Heart right ventricle (tissue), 16 donors: ENCODE measurements at regions of chr15 and their contacts with region 1.

Region 1: GRCh38 chr15:84915011-84915958 is 30.8 kb downstream of the SLC28A1 start:
- DNase-seq: peak; percentile 75 to 90
- ATAC-seq: peak; percentile 53 to 88 (median 81)
- H3K4me3 ChIP-seq: no peak overlapping the region
- H3K27ac ChIP-seq: peak overlapping the region; percentile 77 to 91 (median 88)
- H3K4me1 ChIP-seq: peaks cover 32 to 68% (median 53%) of the 10 kb centered on the region in 9 donors
- H3K27me3 ChIP-seq: no peaks in the 10 kb centered on the region
- CTCF ChIP-seq: no peak

Region 2: DNA sequence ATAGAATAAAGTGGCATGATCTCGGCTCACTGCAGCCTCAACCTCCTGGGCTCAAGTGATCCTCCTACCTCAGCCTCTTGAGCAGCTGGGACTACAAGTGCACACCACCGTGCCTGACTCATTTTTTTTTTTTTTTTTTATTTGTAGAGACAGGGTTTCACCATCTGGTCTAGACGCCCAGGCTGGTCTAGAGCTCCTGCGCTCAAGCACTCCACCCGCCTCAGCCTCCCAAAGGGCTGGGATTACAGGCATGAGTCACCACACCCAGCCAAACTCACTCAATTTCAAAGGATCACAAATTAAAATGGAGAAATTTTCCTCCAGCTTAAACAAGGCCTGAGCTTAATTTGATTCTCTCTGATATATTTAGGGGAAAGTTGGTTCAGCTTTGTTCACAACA is 230.0 kb before region 1 on chr15:
- intact Hi-C with region 1: no loop called
- DNase-seq: peak in 1 of 2 donors; percentile 43
- ATAC-seq: peak in 7 of 8 donors; percentile 50 to 93 (median 53)
- H3K4me3 ChIP-seq: no peak overlapping the region
- H3K27ac ChIP-seq: peak overlapping the region in 2 of 10 donors; percentile 23 to 41
- H3K4me1 ChIP-seq: peaks cover 0 to 30% (median 0%) of the 10 kb centered on the region in 9 donors
- H3K27me3 ChIP-seq: no peaks in the 10 kb centered on the region
- CTCF ChIP-seq: no peak

Region 3: DNA sequence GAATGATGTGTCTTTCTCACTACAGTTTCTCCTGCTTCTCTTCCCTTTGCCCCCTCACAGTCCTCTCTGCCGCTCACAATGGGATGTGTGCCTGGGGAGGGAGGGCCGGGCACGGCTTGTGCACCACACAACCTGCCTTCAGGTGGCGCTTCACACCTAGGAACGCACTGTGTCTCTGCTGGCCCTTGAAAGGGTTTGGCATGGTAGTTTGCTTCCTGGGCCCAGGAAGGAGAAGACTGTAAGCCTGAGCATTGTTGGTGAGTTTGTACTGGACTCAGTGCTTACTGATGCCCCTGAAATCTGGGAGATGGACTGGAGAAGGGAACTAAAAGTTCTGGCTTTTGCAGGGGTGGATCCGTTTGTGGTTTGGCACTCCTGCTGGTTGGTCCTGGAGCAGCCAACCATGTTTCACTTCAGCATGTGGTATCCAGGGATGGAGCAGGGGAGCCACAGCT is 88.9 kb before region 1 on chr15:
- intact Hi-C with region 1: loop called in 2 of 10 experiments (anchors 5 kb)
- DNase-seq: no peak
- ATAC-seq: peak in 5 of 8 donors; percentile 7 to 44 (median 33)
- H3K4me3 ChIP-seq: no peak overlapping the region
- H3K27ac ChIP-seq: peak overlapping the region in 9 of 10 donors; percentile 35 to 99 (median 95)
- H3K4me1 ChIP-seq: peaks cover 24 to 100% (median 96%) of the 10 kb centered on the region in 9 donors
- H3K27me3 ChIP-seq: no peaks in the 10 kb centered on the region
- CTCF ChIP-seq: peak in 7 of 9 donors; percentile 16 to 53 (median 40)

Region 4: DNA sequence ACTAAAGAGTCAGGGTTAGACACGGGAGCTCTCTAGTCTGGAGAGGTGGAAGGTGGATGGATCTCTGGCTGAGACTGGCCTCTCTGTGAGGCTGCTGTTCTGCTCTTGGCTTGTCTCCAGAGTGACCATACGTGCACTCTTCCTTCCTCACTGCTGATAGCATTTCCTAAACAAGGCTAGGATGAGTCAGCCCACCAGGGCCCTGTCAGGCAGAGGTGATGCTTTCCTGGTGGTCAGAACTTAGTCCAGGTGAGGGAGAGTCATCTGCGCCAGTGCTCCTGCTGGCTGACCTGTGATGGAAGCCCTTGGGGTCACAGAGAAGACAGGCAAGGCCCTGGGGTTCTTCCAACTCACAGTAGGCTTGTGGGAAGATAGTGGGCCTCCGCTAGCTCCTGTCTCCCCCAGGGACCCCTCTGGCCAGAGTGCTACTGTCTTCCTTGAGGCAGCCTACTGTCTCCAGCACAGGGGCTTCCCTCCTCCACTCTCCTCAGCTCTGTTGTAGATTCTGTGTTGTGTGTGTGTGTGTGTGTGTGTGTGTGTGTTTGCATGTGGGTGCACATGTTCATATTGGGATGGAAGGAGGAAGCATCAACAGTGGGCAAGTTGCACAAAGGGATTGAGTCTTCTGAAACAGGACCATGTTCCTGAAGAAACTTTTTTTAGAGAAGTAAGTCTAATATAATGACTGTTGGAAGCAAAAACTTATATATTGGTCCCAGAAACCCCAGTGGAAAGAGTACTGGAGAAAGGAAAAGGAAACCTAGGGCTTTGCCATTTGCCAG is 81.6 kb before region 1 on chr15:
- intact Hi-C with region 1: loop called in 2 of 10 experiments (anchors 5 kb)
- DNase-seq: peak in 1 of 2 donors; percentile 53
- ATAC-seq: peak in 7 of 8 donors; percentile 16 to 68 (median 43)
- H3K4me3 ChIP-seq: no peak overlapping the region
- H3K27ac ChIP-seq: peak overlapping the region; percentile 69 to 99 (median 94)
- H3K4me1 ChIP-seq: peaks cover 23 to 100% (median 90%) of the 10 kb centered on the region in 9 donors
- H3K27me3 ChIP-seq: no peaks in the 10 kb centered on the region
- CTCF ChIP-seq: no peak

Region 5: DNA sequence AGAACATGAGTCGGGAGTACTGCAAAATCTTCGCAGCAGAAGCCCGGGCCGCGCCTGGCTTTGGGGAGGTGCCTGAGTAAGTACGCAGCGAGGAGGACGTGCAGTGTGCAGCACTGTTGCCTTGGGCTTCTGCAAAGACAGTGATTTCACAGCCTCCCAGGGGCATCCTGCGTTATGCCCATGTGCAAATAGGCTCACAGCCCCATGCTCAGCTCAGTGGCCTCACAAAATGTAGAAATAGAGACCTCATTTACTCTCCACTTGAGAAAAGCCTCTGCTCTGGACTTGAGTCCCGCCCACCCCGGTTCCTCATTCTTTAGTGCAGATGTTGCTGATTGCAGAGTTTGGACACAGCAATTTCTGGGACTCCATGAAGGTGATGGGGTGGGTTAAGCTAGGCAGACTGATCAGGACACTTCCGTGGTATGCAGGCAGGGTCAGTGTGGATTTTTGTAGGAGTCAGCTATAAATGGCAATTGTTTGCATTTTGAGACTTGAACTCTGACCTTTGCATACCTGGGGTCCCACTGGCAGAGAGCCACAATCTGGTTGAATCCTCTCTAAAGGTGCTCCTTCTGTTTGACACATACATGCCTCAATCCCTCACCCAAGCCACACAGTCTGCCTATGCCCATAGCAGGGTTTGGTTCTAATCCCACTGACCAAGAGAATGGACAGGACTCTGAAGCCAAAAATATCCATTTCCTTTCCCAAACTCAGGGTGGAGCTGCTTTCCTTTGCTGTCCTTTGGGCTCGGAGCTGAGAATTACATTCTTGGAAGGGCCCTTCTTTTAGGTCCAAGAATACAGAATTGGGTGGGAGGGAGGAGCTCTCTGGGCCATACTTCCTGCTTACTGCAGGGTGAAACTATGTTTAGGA is 51.5 kb before region 1 on chr15:
- intact Hi-C with region 1: loop called in 3 of 10 experiments (anchors 5 to 10 kb)
- DNase-seq: no peak
- ATAC-seq: peak; percentile 8 to 77 (median 40)
- H3K4me3 ChIP-seq: peak overlapping the region in 5 of 10 donors; percentile 3 to 29 (median 21)
- H3K27ac ChIP-seq: peak overlapping the region in 8 of 10 donors; percentile 13 to 65 (median 48)
- H3K4me1 ChIP-seq: peaks cover 11 to 51% (median 29%) of the 10 kb centered on the region in 9 donors
- H3K27me3 ChIP-seq: no peaks in the 10 kb centered on the region
- CTCF ChIP-seq: peak in 8 of 9 donors; percentile 9 to 61 (median 46)

Region 6: GRCh38 chr15:84874981-84875699 is 40.1 kb before region 1 on chr15:
- intact Hi-C with region 1: no loop called
- DNase-seq: no peak
- ATAC-seq: no peak
- H3K4me3 ChIP-seq: no peak overlapping the region
- H3K27ac ChIP-seq: no peak overlapping the region
- H3K4me1 ChIP-seq: peaks cover 0 to 18% (median 3%) of the 10 kb centered on the region in 9 donors
- H3K27me3 ChIP-seq: no peaks in the 10 kb centered on the region
- CTCF ChIP-seq: no peak